HCT116 (cell line): ENCODE measurements at regions of chr11 and their contacts with region 1.

Region 1: GRCh38 chr11:61446211-61446651 is 16.3 kb downstream of the SDHAF2 start:
- DNase-seq: peak; percentile 73
- ATAC-seq: peak; percentile 98
- H3K4me3 ChIP-seq: no peak overlapping the region
- H3K27ac ChIP-seq: peak overlapping the region; percentile 15; the same call in 1 of the 2 replicates
- H3K4me1 ChIP-seq: peaks cover 0 to 8% of the 10 kb centered on the region in 2 experiments; a peak in 2 of 4 replicates
- H3K27me3 ChIP-seq: no peaks in the 10 kb centered on the region
- CTCF ChIP-seq: peak; percentile 81 to 94 (median 91); a peak in 5 of 6 replicates
- POLR2A ChIP-seq: no peak
- RAD21 ChIP-seq: peak; percentile 84

Region 2: GRCh38 chr11:61429691-61430582 is 16.3 kb before region 1 on chr11 and contains the starts of genes CPSF7 and SDHAF2:
- CTCF ChIA-PET with region 1: interaction called, 24 read pairs
- POLR2A ChIA-PET with region 1: interaction called, 3 read pairs
- RAD21 ChIA-PET with region 1: no interaction called
- intact Hi-C with region 1: no loop called
- DNase-seq: peak; percentile 84
- ATAC-seq: peak; percentile 92
- H3K4me3 ChIP-seq: peak within 1 kb of the TSS; percentile 92 to 100
- H3K27ac ChIP-seq: peak within 1 kb of the TSS; percentile 96
- H3K4me1 ChIP-seq: peaks cover 10 to 20% of the 10 kb centered on the region in 2 experiments
- H3K27me3 ChIP-seq: no peaks in the 10 kb centered on the region
- CTCF ChIP-seq: no peak
- POLR2A ChIP-seq: peak; percentile 59
- RAD21 ChIP-seq: no peak
- total RNA-seq, gene CPSF7: 110 TPM
- total RNA-seq, gene SDHAF2: 34.0 TPM

Region 3: GRCh38 chr11:61477727-61478148 is 31.5 kb after region 1 on chr11:
- CTCF ChIA-PET with region 1: interaction called, 10 read pairs
- POLR2A ChIA-PET with region 1: no interaction called
- RAD21 ChIA-PET with region 1: no interaction called
- intact Hi-C with region 1: no loop called
- DNase-seq: no peak
- ATAC-seq: peak; percentile 54
- H3K4me3 ChIP-seq: no peak overlapping the region
- H3K27ac ChIP-seq: no peak overlapping the region
- H3K4me1 ChIP-seq: 0 out of 4 replicates have a peak, but pooled peaks cover 0 to 3% of the 10 kb centered on the region in 2 experiments
- H3K27me3 ChIP-seq: no peaks in the 10 kb centered on the region
- CTCF ChIP-seq: peak; percentile 87 to 93 (median 90)
- POLR2A ChIP-seq: no peak
- RAD21 ChIP-seq: peak; percentile 94

Region 4: DNA sequence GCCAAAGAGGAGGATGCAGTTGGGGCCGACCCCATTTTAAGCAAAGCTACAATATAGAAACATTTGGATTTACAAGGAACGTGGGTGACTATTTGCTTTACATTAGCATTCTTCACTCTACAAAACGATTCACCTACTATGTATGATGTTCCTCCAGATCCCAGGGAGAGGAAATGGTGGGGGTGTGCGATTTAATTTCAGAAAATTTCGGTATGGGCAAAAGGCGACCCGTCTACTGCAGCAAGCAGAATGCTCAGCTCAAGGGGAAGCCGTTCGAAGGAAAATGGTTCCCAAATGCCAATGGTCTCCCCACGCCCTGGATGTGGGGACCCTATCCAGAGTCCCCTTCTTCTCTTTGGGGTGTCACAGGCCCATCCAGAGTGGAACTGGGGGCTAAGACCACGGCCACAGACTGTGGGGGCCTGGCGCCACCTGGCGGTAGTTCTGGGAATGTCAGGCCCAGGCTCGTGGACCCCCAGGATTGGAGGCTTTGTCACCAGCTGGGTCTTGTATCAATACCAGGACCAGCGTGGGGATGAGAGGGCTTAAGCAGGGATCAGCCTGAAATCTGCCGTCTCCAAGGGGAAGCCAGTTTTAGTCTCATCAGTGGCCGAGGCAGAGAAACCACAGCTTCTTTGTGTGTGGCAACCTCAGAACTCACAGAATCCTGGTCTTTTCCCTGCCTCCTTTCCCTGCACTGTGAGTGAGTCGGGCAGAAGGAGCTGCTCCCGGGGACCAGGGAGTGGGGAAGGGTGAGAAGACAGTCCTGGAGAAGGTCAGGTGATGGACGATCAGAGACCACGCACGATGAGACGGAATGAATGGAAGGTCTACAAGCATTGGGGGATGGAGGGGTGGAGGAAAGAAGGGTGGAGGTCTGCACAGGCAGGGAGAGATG is 70.7 kb after region 1 on chr11:
- CTCF ChIA-PET with region 1: interaction called, 32 read pairs
- POLR2A ChIA-PET with region 1: interaction called, 3 read pairs
- RAD21 ChIA-PET with region 1: no interaction called
- intact Hi-C with region 1: loop called (anchors 1 kb)
- DNase-seq: no peak
- ATAC-seq: peak; percentile 75
- H3K4me3 ChIP-seq: no peak overlapping the region
- H3K27ac ChIP-seq: no peak overlapping the region
- H3K4me1 ChIP-seq: peaks cover 8 to 14% of the 10 kb centered on the region in 2 experiments; a peak in 2 of 4 replicates
- H3K27me3 ChIP-seq: no peaks in the 10 kb centered on the region
- CTCF ChIP-seq: peak; percentile 81 to 99 (median 98)
- POLR2A ChIP-seq: no peak
- RAD21 ChIP-seq: peak; percentile 82

Region 5: DNA sequence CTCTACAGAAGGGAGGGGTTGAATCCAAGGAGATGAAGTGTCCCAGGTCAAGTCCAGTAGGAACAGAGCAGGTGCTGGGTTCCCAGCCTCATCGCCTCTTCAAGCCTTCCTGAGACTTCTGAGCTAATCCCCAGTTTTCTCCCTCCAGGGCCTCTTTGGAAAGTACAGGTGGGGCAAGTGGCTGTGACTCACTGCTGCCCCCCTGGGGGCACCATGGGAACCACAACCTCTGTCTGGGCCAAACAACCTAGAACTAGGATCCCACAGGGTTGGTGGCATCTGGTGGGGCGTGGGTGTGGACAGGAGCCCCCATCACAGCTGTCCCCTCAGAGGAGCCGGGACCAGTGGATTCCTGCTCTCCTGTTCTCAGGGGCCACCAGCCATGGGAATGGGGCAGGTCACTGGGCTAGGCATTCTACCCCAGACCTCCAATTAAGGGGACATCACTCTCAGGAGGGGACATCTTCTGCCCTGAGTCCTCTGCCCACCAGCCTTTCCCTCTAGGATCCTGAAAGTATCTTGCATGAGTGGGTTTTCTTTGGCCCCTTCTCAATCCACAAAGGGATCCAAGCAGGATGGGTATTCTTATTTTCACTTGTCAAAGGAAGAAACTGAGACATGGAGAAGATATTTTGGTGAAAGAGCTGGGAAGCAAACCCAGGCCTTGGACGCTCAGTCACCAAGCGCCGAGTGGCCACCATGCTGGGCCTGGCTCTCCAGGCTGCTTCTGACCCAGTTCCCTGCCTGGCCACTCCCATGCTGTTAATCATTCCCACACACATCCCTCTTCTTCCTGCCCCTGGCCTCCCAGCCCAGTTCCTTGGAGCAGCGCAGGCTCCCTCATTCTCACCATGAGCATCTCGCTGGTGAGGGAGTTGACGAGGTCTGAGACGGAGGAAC is 86.2 kb after region 1 on chr11:
- CTCF ChIA-PET with region 1: interaction called, 14 read pairs
- POLR2A ChIA-PET with region 1: no interaction called
- RAD21 ChIA-PET with region 1: interaction called in 1 of 2 experiments, 3 read pairs
- intact Hi-C with region 1: no loop called
- DNase-seq: no peak
- ATAC-seq: peak; percentile 93
- H3K4me3 ChIP-seq: no peak overlapping the region
- H3K27ac ChIP-seq: no peak overlapping the region
- H3K4me1 ChIP-seq: peaks cover 0 to 9% of the 10 kb centered on the region in 2 experiments; a peak in 2 of 4 replicates
- H3K27me3 ChIP-seq: no peaks in the 10 kb centered on the region
- CTCF ChIP-seq: peak; percentile 78 to 98 (median 93); a peak in 5 of 6 replicates
- POLR2A ChIP-seq: no peak
- RAD21 ChIP-seq: peak; percentile 58

Region 6: GRCh38 chr11:61733120-61733978 is 287.1 kb after region 1 on chr11:
- CTCF ChIA-PET with region 1: interaction called, 16 read pairs
- POLR2A ChIA-PET with region 1: no interaction called
- RAD21 ChIA-PET with region 1: interaction called in 1 of 2 experiments, 3 read pairs
- intact Hi-C with region 1: no loop called
- DNase-seq: peak; percentile 63
- ATAC-seq: peak; percentile 69
- H3K4me3 ChIP-seq: no peak overlapping the region
- H3K27ac ChIP-seq: no peak overlapping the region
- H3K4me1 ChIP-seq: peaks cover 29 to 43% of the 10 kb centered on the region in 2 experiments
- H3K27me3 ChIP-seq: no peaks in the 10 kb centered on the region
- CTCF ChIP-seq: peak; percentile 95 to 99 (median 99)
- POLR2A ChIP-seq: no peak
- RAD21 ChIP-seq: peak; percentile 98